PC-9 (cell line): ENCODE measurements at regions of chr3 and their contacts with region 1.

Region 1: GRCh38 chr3:191246628-191247027 is 47.6 kb downstream of the OSTN start:
- DNase-seq: peak; percentile 46 to 86
- H3K4me3 ChIP-seq: no peak overlapping the region
- H3K27ac ChIP-seq: no peak overlapping the region
- H3K4me1 ChIP-seq: no peaks in the 10 kb centered on the region
- H3K27me3 ChIP-seq: no peaks in the 10 kb centered on the region
- CTCF ChIP-seq: no peak

Region 2: GRCh38 chr3:191141728-191142127 is 104.9 kb before region 1 on chr3:
- CTCF ChIA-PET with region 1: no interaction called
- POLR2A ChIA-PET with region 1: no interaction called
- intact Hi-C with region 1: no loop called
- DNase-seq: peak in 1 of 2 experiments; percentile 39
- H3K4me3 ChIP-seq: no peak overlapping the region
- H3K27ac ChIP-seq: no peak overlapping the region
- H3K4me1 ChIP-seq: no peaks in the 10 kb centered on the region; the same call in 1 of the 2 replicates
- H3K27me3 ChIP-seq: no peaks in the 10 kb centered on the region
- CTCF ChIP-seq: no peak

Region 3: DNA sequence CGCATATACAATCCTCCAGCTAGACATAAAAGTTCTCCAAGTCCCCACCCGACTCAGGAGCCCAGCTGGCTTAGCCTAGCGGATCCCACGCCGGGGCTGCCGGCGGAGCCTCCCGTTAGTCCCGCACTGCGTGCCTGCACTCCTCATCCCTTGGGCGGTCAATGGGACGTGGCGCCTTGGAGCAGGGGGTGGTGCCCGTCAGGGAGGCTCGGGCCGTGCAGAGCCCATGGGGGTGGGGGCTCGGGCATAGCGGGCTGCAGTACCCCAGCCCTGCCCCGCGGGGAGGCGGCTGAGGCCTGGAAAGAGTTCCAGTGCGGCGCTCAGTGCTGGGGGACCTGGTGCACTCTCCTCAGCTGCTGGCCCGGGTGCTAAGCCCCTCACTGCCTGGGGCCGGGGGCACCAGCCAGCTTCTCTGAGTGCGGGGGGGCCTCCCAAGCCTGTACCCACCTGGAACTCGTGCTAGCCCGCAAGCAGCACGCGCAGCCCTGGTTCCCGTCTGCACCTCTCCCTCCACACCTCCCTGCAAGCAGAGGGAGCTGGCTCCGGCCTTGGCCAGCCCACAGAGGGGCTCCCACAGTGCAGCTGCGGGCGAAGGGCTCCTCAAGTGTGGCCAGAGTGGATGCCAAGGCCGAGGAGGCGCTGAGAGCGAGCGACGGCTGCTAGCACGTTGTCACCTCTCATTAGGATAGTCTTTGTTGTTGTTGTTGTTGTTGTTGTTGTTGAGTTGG is 70.4 kb after region 1 on chr3:
- CTCF ChIA-PET with region 1: no interaction called
- POLR2A ChIA-PET with region 1: no interaction called
- intact Hi-C with region 1: no loop called
- DNase-seq: no peak
- H3K4me3 ChIP-seq: no peak overlapping the region
- H3K27ac ChIP-seq: no peak overlapping the region
- H3K4me1 ChIP-seq: no peaks in the 10 kb centered on the region
- H3K27me3 ChIP-seq: no peaks in the 10 kb centered on the region
- CTCF ChIP-seq: no peak

Region 4: DNA sequence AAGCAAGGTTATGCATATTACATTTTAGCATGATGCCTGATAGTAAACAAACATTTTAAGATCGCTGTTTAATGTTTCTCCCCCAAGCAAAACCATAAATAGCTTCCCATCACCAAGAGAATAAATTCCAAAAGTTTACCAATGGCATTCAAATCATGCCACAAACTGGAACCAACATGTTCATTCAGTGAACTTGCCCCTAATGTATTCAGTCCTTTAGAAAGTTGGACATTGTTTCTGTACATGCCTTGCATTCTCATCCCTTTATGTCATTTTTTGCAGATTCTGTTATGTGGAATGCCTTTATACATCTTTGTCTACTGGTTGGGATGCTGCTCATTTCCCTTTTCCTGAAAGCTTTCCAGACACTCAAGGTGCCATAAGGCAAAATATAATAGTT is 319.8 kb after region 1 on chr3:
- CTCF ChIA-PET with region 1: interaction called, 16 read pairs
- POLR2A ChIA-PET with region 1: no interaction called
- intact Hi-C with region 1: no loop called
- DNase-seq: no peak
- H3K4me3 ChIP-seq: no peak overlapping the region
- H3K27ac ChIP-seq: no peak overlapping the region
- H3K4me1 ChIP-seq: peaks cover 16% of the 10 kb centered on the region
- H3K27me3 ChIP-seq: no peaks in the 10 kb centered on the region
- CTCF ChIP-seq: no peak